Caco-2 (cell line): ENCODE measurements at regions of chr1 and their contacts with region 1.

Region 1: GRCh38 chr1:40344597-40344996 is 27.5 kb upstream of the COL9A2 start:
- DNase-seq: peak; percentile 15 to 34
- H3K4me3 ChIP-seq: no peak overlapping the region
- H3K4me3 Mint-ChIP-seq: no peak overlapping the region
- H3K27ac Mint-ChIP-seq: no peak overlapping the region
- H3K4me1 ChIP-seq: no peaks in the 10 kb centered on the region
- H3K4me1 Mint-ChIP-seq: no peaks in the 10 kb centered on the region
- H3K27me3 ChIP-seq: no peaks in the 10 kb centered on the region
- H3K27me3 Mint-ChIP-seq: no peaks in the 10 kb centered on the region
- CTCF ChIP-seq: no peak

Region 2: GRCh38 chr1:40267767-40268187 is 76.8 kb before region 1 on chr1:
- CTCF ChIA-PET with region 1: no interaction called
- POLR2A ChIA-PET with region 1: no interaction called
- intact Hi-C with region 1: no loop called
- DNase-seq: no peak
- H3K4me3 ChIP-seq: no peak overlapping the region
- H3K4me3 Mint-ChIP-seq: no peak overlapping the region
- H3K27ac Mint-ChIP-seq: no peak overlapping the region
- H3K4me1 ChIP-seq: no peaks in the 10 kb centered on the region
- H3K4me1 Mint-ChIP-seq: no peaks in the 10 kb centered on the region
- H3K27me3 ChIP-seq: no peaks in the 10 kb centered on the region
- H3K27me3 Mint-ChIP-seq: no peaks in the 10 kb centered on the region
- CTCF ChIP-seq: no peak

Region 3: DNA sequence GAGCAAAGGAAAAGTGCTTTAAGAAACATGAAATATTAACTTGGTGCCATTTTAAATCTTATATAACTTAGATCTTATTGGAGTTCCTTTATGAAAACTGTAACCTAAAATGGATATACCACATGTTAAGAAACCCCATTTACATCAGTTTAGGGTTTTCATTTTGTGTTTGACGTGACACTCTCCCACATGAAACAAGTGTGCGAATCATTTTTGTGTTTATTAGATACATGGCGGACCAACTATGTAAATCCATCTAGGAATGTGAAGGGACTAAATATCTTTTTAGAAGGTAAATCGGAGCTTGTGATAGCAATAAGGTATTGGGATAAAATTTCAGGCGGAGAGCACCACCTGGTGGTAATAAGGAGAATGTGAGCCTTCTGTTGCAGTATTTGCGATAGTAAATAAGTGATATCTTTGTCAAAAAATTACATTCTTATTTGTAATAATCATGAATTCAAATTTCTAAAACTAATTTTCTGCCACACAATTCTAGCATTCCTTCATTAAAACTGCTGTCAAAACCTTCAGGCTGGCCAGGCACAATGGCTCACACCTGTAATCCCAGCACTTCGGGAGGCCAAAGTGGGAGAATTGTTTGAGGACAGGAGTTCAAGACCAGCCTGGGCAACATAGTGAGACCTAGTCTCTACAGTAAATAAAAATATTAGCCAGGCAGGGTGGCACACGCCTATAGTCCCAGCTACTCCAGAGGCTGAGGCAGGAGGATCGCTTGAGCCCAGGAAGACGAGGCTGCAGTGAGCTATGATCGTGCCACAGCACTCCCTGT is 60.3 kb after region 1 on chr1:
- CTCF ChIA-PET with region 1: interaction called, 15 read pairs
- POLR2A ChIA-PET with region 1: no interaction called
- intact Hi-C with region 1: loop called (anchors 2 kb)
- DNase-seq: peak in 1 of 2 experiments; percentile 19
- H3K4me3 ChIP-seq: no peak overlapping the region
- H3K4me3 Mint-ChIP-seq: no peak overlapping the region
- H3K27ac Mint-ChIP-seq: no peak overlapping the region
- H3K4me1 ChIP-seq: no peaks in the 10 kb centered on the region
- H3K4me1 Mint-ChIP-seq: no peaks in the 10 kb centered on the region
- H3K27me3 ChIP-seq: no peaks in the 10 kb centered on the region
- H3K27me3 Mint-ChIP-seq: no peaks in the 10 kb centered on the region
- CTCF ChIP-seq: peak; percentile 54 to 61

Region 4: GRCh38 chr1:40630488-40631381 is 286.1 kb after region 1 on chr1:
- CTCF ChIA-PET with region 1: no interaction called
- POLR2A ChIA-PET with region 1: no interaction called
- intact Hi-C with region 1: no loop called
- DNase-seq: peak; percentile 14 to 21
- H3K4me3 ChIP-seq: no peak overlapping the region
- H3K4me3 Mint-ChIP-seq: no peak overlapping the region
- H3K27ac Mint-ChIP-seq: no peak overlapping the region
- H3K4me1 ChIP-seq: no peaks in the 10 kb centered on the region
- H3K4me1 Mint-ChIP-seq: no peaks in the 10 kb centered on the region
- H3K27me3 ChIP-seq: no peaks in the 10 kb centered on the region
- H3K27me3 Mint-ChIP-seq: no peaks in the 10 kb centered on the region
- CTCF ChIP-seq: peak in 1 of 2 experiments; percentile 11